Activated CD8-positive, alpha-beta T cell treated with anti-CD3 and anti-CD28 coated beads for 36 hours (primary cell): ENCODE measurements at regions of chr3 and their contacts with region 1.

Region 1: GRCh38 chr3:134212906-134213665 is 37.6 kb downstream of the RYK start:
- DNase-seq: peak; percentile 94
- ATAC-seq: peak; percentile 92
- H3K4me3 Mint-ChIP-seq: no peak overlapping the region
- H3K27ac Mint-ChIP-seq: no peak overlapping the region
- H3K4me1 Mint-ChIP-seq: peaks cover 30% of the 10 kb centered on the region
- H3K27me3 Mint-ChIP-seq: no peaks in the 10 kb centered on the region
- CTCF ChIP-seq: peak; percentile 97

Region 2: DNA sequence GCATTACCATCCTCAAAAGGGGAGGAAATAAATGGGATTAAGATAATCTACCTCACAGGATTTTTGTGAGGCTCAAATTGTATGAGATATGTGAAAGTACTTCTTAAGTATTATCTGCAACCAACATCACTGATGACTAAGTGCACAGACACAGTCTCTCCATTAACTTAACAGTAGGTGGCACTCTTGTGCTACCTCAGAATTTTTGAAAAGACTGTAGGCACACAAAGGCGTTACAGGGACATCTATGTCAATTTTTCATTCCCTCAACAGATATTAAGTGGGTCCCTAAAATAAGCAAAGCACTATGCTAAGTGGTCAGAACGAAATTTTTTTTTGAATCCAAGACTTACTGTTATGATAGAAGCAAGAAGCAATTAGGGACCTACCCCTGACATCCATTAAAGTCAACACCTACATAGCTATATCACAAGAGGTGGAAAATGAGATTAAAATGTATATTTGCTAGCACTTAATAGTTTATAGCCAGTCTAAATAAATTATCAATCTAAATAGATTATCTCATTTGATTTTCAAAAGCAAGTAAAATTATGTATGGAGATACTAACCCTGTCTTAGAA is 15.3 kb before region 1 on chr3:
- CTCF ChIA-PET with region 1: interaction called, 73 read pairs
- POLR2A ChIA-PET with region 1: no interaction called
- intact Hi-C with region 1: no loop called
- DNase-seq: no peak
- ATAC-seq: peak; percentile 88
- H3K4me3 Mint-ChIP-seq: no peak overlapping the region
- H3K27ac Mint-ChIP-seq: no peak overlapping the region
- H3K4me1 Mint-ChIP-seq: peaks cover 8% of the 10 kb centered on the region
- H3K27me3 Mint-ChIP-seq: no peaks in the 10 kb centered on the region
- CTCF ChIP-seq: peak; percentile 77

Region 3: GRCh38 chr3:134242649-134243617 is 29.8 kb after region 1 on chr3:
- CTCF ChIA-PET with region 1: interaction called, 26 read pairs
- POLR2A ChIA-PET with region 1: interaction called, 4 read pairs
- intact Hi-C with region 1: loop called (anchors 5 kb)
- DNase-seq: no peak
- ATAC-seq: peak; percentile 25
- H3K4me3 Mint-ChIP-seq: no peak overlapping the region
- H3K27ac Mint-ChIP-seq: no peak overlapping the region
- H3K4me1 Mint-ChIP-seq: peaks cover 85% of the 10 kb centered on the region
- H3K27me3 Mint-ChIP-seq: no peaks in the 10 kb centered on the region
- CTCF ChIP-seq: no peak

Region 4: GRCh38 chr3:134260984-134261383 is 47.9 kb after region 1 on chr3:
- CTCF ChIA-PET with region 1: interaction called, 15 read pairs
- POLR2A ChIA-PET with region 1: no interaction called
- intact Hi-C with region 1: no loop called
- DNase-seq: no peak
- ATAC-seq: no peak
- H3K4me3 Mint-ChIP-seq: no peak overlapping the region
- H3K27ac Mint-ChIP-seq: no peak overlapping the region
- H3K4me1 Mint-ChIP-seq: peaks cover 22% of the 10 kb centered on the region
- H3K27me3 Mint-ChIP-seq: peaks cover 24% of the 10 kb centered on the region
- CTCF ChIP-seq: no peak

Region 5: DNA sequence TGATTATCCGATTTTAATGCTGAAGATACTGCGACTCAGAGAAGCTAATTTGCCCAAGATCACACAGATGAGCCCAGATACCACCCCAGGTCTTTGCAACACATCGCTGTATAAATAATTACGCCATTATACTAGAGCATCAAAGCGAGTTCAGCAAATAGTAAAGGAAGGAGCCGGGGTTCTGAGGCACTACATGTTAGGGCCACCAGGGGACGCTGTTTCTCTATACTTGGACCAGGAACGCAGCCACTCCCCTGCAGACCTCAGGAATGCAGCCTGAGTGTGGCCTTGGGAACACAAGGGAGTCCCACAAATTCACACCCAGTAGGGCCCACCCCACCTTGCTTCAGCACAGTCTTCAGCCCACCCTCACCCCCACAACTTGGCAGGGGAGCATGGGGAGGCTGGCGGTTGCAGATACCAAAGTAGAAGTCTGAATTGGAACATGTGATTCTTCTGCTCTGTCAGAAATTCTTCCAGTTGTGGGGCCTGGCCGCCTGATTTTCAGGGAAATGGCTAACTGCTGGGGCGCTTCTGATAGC is 95.3 kb after region 1 on chr3:
- CTCF ChIA-PET with region 1: interaction called, 55 read pairs
- POLR2A ChIA-PET with region 1: no interaction called
- intact Hi-C with region 1: no loop called
- DNase-seq: peak; percentile 86
- ATAC-seq: peak; percentile 90
- H3K4me3 Mint-ChIP-seq: no peak overlapping the region
- H3K27ac Mint-ChIP-seq: no peak overlapping the region
- H3K4me1 Mint-ChIP-seq: peaks cover 2% of the 10 kb centered on the region
- H3K27me3 Mint-ChIP-seq: peaks cover 34% of the 10 kb centered on the region
- CTCF ChIP-seq: peak; percentile 96

Region 6: DNA sequence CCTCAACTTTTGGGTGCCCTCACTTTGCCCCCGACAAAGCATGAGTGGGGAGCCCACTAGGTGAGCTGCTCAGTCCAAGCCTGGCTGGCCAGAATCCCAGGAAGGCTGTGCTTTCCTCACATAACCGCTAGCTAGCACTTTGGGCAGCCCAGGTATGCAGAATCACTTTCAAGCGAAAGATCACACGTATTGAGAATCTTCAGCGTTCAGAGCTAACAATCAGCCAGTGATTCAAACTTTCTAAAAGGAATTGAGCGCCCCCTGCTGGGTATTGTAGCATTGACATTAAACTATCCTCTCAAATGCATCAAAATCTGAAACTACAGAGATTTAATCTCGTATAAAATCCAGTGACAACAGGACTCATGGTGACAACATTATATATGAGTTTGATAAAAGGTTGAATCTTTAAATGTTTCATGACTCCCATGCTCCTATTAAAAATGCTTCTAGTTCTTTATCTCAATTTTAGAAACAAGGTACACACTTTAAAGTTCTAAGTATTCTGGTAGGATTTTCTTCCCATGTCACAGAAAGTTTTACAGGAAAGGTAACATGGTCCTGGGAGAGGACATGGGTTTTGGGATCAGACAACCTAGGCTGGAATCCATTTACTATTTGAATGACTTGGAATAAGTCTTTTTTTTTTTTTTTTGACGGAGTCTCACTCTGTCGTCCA is 260.9 kb after region 1 on chr3:
- CTCF ChIA-PET with region 1: interaction called, 37 read pairs
- POLR2A ChIA-PET with region 1: interaction called, 3 read pairs
- intact Hi-C with region 1: loop called (anchors 5 kb)
- DNase-seq: peak; percentile 91
- ATAC-seq: peak; percentile 84
- H3K4me3 Mint-ChIP-seq: no peak overlapping the region
- H3K27ac Mint-ChIP-seq: no peak overlapping the region
- H3K4me1 Mint-ChIP-seq: peaks cover 2% of the 10 kb centered on the region
- H3K27me3 Mint-ChIP-seq: no peaks in the 10 kb centered on the region
- CTCF ChIP-seq: peak; percentile 89